ENCODE measurements at regions of chr1 and their contacts with region 1.

Region 1: GRCh38 chr1:93878889-93879586 is at the start of gene DNTTIP2:
- DNase-seq: peak; percentile 87 to 98 (median 95)

Region 2: GRCh38 chr1:93909146-93910050 is 30.4 kb after region 1 on chr1 and contains the start of gene GCLM:
- intact Hi-C with region 1: loop called (anchors 1 kb)
- DNase-seq: peak; percentile 78 to 98 (median 86)

Region 3: DNA sequence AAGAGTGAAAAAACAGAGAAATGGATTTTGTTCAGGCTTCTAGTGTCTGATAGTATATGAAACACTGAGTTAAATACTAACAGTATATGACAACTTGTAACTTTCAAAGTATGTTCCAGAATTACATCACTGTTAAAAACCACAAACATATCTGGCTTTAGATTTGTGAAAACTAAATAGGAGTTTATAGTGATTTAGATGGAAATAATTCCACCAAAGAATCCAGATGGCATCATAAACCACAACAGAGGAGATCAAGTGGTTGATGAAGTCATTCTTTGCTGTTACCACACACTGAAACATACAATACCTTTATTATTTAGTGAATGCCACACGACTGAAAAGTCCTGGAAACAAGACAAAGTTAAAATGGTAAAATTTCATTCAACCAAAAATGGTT is 1156.5 kb after region 1 on chr1:
- intact Hi-C with region 1: no loop called
- DNase-seq: no peak